ENCODE measurements at regions of chr13 and their contacts with region 1.

Region 1: DNA sequence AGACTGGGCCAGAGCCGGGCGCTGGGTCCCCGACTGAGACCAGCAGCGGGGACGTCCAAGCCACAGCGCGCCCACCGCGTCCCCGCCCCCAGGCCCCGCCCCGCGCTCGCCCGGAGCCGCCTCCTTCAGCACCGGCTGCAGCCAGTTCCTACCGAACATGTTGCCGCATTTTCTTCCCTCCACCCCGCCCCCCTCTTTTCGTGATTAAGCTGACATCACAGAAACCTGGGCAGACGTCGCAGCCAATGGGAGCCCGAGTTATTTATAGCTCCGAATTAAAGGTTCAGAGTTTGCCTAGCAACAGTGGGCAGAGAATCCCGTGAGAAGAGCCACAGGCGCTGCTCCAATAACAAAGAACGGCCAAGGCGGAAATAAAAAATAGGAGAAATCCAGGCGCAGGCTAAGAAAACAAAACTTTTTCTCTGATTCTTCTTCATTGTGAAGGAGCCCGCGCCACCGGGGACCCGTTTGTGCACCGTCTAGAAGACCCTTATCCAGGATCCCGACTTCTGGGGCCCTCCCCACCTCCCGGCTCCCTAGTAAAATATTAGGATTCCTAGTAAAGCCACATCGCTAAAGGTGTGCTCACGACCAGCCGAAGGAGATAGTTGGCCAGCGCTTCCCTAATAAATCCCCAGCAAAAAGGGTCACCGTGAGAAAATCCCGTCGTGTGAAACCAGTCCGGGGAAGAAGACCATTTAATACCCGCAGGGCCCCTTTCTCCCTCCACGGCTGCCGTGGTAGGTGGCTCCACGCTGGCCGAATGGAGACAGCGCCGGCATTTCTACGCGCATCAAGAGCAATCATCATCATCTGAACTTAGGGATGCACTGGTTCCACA is 61.7 kb downstream of the SERP2 start:
- DNase-seq: peak; percentile 98
- H3K4me3 ChIP-seq: peak overlapping the region; percentile 51 to 65 (median 58)
- H3K27ac ChIP-seq: peak overlapping the region; percentile 87 to 92 (median 90)
- H3K4me1 ChIP-seq: peaks cover 3 to 43% (median 34%) of the 10 kb centered on the region in 4 donors
- H3K27me3 ChIP-seq: no peaks in the 10 kb centered on the region
- CTCF ChIP-seq: no peak
- EP300 ChIP-seq: no peak
- POLR2A ChIP-seq: peak; percentile 84

Region 2: GRCh38 chr13:43583321-43583720 is 852.0 kb before region 1 on chr13:
- in situ Hi-C with region 1: no loop called
- intact Hi-C with region 1: no loop called
- DNase-seq: no peak
- H3K4me3 ChIP-seq: no peak overlapping the region
- H3K27ac ChIP-seq: no peak overlapping the region
- H3K4me1 ChIP-seq: no peaks in the 10 kb centered on the region
- H3K27me3 ChIP-seq: no peaks in the 10 kb centered on the region
- CTCF ChIP-seq: no peak
- EP300 ChIP-seq: no peak
- POLR2A ChIP-seq: no peak

Region 3: DNA sequence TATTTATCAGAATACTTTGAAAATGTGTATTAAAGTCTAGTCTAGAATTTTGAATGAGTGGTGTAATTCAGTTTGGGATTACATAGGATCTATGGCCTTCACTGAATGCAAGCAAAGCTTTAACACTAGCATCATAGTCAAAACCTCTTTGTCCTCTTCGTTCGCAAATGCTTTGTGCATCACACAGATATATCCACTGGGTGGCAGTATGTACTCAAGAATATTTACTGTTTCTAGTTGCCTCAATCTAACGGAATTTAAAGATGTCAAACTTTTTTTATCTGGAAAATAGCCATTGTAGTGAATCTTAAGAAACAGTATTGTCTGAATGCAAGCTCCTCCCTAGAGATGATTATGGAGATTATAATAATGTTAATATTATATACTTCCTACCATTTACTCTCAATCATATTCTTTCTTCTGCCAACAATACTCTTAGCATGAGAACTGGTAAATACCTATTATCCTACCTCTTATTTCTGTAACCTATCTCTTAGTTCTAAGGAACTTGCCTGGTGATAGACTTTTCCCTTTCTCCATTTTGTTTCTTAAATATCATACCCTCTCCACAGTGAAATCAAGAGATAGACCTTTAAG is 529.8 kb before region 1 on chr13:
- in situ Hi-C with region 1: loop called in 3 of 4 experiments (anchors 5 to 10 kb)
- intact Hi-C with region 1: no loop called
- DNase-seq: no peak
- H3K4me3 ChIP-seq: no peak overlapping the region
- H3K27ac ChIP-seq: no peak overlapping the region
- H3K4me1 ChIP-seq: no peaks in the 10 kb centered on the region
- H3K27me3 ChIP-seq: no peaks in the 10 kb centered on the region
- CTCF ChIP-seq: peak; percentile 74 to 87 (median 82)
- EP300 ChIP-seq: no peak
- POLR2A ChIP-seq: no peak

Region 4: DNA sequence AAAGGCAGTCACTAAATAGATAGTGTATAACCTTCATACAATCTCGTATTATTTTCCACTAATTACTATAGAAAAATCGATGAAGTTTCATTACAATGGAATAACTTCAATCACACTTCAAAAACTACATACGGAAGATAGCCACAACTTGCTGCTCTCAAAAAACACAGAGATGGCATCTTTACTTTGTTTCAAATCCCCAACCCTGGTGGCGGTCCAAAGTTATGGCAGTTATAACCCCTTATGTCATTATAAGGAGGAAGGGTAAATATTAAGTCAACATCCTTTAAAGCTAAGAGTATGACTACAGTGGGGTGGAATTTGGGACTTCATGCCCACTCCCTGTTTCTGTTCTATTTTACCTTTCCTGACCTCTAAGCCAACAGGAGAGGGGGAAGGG is 409.2 kb before region 1 on chr13:
- in situ Hi-C with region 1: no loop called
- intact Hi-C with region 1: no loop called
- DNase-seq: no peak
- H3K4me3 ChIP-seq: no peak overlapping the region
- H3K27ac ChIP-seq: no peak overlapping the region
- H3K4me1 ChIP-seq: no peaks in the 10 kb centered on the region
- H3K27me3 ChIP-seq: no peaks in the 10 kb centered on the region
- CTCF ChIP-seq: no peak
- EP300 ChIP-seq: no peak
- POLR2A ChIP-seq: no peak

Region 5: GRCh38 chr13:44058624-44059215 is 376.6 kb before region 1 on chr13:
- in situ Hi-C with region 1: loop called in 2 of 4 experiments (anchors 5 kb)
- intact Hi-C with region 1: no loop called
- DNase-seq: no peak
- H3K4me3 ChIP-seq: no peak overlapping the region
- H3K27ac ChIP-seq: no peak overlapping the region
- H3K4me1 ChIP-seq: peaks cover 0 to 4% (median 0%) of the 10 kb centered on the region in 4 donors
- H3K27me3 ChIP-seq: no peaks in the 10 kb centered on the region
- CTCF ChIP-seq: no peak
- EP300 ChIP-seq: no peak
- POLR2A ChIP-seq: no peak

Region 6: GRCh38 chr13:44191504-44192171 is 243.7 kb before region 1 on chr13:
- in situ Hi-C with region 1: loop called in 2 of 4 experiments (anchors 25 kb)
- intact Hi-C with region 1: no loop called
- DNase-seq: peak; percentile 42
- H3K4me3 ChIP-seq: no peak overlapping the region
- H3K27ac ChIP-seq: peak overlapping the region in 1 of 4 donors; percentile 7
- H3K4me1 ChIP-seq: no peaks in the 10 kb centered on the region
- H3K27me3 ChIP-seq: no peaks in the 10 kb centered on the region
- CTCF ChIP-seq: peak; percentile 59 to 87 (median 73)
- EP300 ChIP-seq: no peak
- POLR2A ChIP-seq: no peak

Region 7: GRCh38 chr13:44300895-44301638 is 134.3 kb before region 1 on chr13:
- in situ Hi-C with region 1: no loop called
- intact Hi-C with region 1: loop called (anchors 10 kb)
- DNase-seq: no peak
- H3K4me3 ChIP-seq: no peak overlapping the region
- H3K27ac ChIP-seq: peak overlapping the region; percentile 73 to 83 (median 78)
- H3K4me1 ChIP-seq: peaks cover 11 to 54% (median 15%) of the 10 kb centered on the region in 4 donors
- H3K27me3 ChIP-seq: no peaks in the 10 kb centered on the region
- CTCF ChIP-seq: no peak
- EP300 ChIP-seq: no peak
- POLR2A ChIP-seq: no peak

Region 8: GRCh38 chr13:44549461-44549860 is 114.1 kb after region 1 on chr13:
- in situ Hi-C with region 1: no loop called
- intact Hi-C with region 1: no loop called
- DNase-seq: no peak
- H3K4me3 ChIP-seq: no peak overlapping the region
- H3K27ac ChIP-seq: no peak overlapping the region
- H3K4me1 ChIP-seq: no peaks in the 10 kb centered on the region
- H3K27me3 ChIP-seq: no peaks in the 10 kb centered on the region
- CTCF ChIP-seq: no peak
- EP300 ChIP-seq: no peak
- POLR2A ChIP-seq: no peak